ENCODE measurements at regions of chr1 and their contacts with region 1.

Region 1: DNA sequence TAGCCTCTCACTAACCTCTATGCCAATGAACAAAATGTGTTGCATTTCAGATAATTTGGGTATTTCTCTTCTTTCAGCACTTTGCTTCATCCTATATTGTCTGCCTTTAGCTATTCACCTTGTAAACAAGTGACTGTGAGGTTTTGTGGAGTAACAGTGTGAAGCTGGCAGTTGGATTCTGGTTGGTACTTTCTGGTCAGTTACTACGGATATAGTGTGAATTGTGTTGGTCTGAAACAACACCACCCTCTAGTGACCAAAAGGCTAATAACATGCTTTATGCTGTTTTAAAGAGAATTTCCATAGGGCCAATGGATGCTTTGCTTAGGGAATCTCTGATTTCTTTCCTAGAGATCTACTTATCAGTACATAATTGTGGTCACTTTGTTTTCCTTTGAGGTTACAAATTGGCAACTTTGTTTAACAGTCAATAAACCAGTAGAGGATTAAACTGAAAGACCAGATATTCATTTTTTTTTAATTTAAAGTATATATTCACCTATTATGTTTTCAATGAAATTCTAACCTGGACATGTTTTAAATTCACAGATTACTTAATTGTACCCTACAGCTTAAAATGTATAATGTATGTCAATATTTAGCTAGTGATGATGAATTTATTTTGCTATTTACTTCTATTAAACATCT is 2.5 kb upstream of the PTGER3 start:
- DNase-seq: peak in 3 of 7 donors; percentile 22 to 35 (median 30)
- H3K4me3 ChIP-seq: no peak overlapping the region
- H3K27ac ChIP-seq: no peak overlapping the region
- H3K4me1 ChIP-seq: peaks cover 12 to 13% of the 10 kb centered on the region in 2 donors
- H3K27me3 ChIP-seq: peaks cover 23% of the 10 kb centered on the region
- CTCF ChIP-seq: peak; percentile 63 to 87 (median 82)
- POLR2A ChIP-seq: no peak

Region 2: GRCh38 chr1:70685300-70686241 is 364.5 kb before region 1 on chr1:
- intact Hi-C with region 1: loop called (anchors 5 kb)
- DNase-seq: peak; percentile 60 to 88 (median 76)
- H3K4me3 ChIP-seq: no peak overlapping the region
- H3K27ac ChIP-seq: no peak overlapping the region
- H3K4me1 ChIP-seq: no peaks in the 10 kb centered on the region
- H3K27me3 ChIP-seq: no peaks in the 10 kb centered on the region
- CTCF ChIP-seq: peak; percentile 81 to 92 (median 90)
- POLR2A ChIP-seq: no peak

Region 3: DNA sequence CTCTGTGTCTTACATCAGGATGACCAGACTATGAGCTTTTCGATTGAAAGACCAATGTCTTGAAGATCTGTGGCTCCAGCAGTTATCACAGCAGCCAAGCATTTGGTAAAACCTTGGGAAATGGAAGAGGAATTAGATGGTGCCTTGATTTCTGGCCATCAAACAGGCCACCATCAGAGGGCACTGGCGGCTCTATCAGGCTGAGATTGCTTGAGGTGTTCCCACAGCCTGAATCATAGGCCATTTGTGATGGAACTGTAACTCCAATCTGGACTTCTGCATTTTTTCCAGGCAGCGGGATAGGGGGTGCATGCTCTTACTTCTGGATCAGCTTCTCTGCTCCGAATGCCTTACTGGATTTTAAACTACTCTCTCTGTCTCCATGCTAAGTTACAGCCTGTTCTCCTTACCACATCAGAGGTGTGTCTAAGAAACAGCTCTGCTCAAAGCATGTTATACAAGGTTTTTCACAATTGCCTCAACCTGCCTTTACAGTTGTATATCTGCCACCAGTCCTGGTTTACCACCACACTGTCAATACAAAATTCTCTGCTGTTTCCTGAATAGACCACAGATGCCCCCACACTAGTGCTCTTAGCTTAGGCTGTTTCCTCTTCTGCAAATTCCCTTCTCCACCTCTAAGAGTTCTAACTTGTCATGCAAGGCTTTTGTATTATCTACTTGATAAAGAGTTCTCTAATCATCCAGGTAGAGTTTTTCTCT is 183.4 kb before region 1 on chr1:
- intact Hi-C with region 1: loop called in 1 of 2 experiments (anchors 10 kb)
- DNase-seq: peak; percentile 19 to 67 (median 37)
- H3K4me3 ChIP-seq: no peak overlapping the region
- H3K27ac ChIP-seq: no peak overlapping the region
- H3K4me1 ChIP-seq: no peaks in the 10 kb centered on the region
- H3K27me3 ChIP-seq: no peaks in the 10 kb centered on the region
- CTCF ChIP-seq: peak in 5 of 6 experiments; percentile 19 to 41 (median 29)
- POLR2A ChIP-seq: no peak

Region 4: GRCh38 chr1:70910013-70910412 is 140.1 kb before region 1 on chr1:
- intact Hi-C with region 1: no loop called
- DNase-seq: no peak
- H3K4me3 ChIP-seq: no peak overlapping the region
- H3K27ac ChIP-seq: no peak overlapping the region
- H3K4me1 ChIP-seq: peaks cover 4 to 6% of the 10 kb centered on the region in 2 donors
- H3K27me3 ChIP-seq: no peaks in the 10 kb centered on the region
- CTCF ChIP-seq: no peak
- POLR2A ChIP-seq: no peak

Region 5: DNA sequence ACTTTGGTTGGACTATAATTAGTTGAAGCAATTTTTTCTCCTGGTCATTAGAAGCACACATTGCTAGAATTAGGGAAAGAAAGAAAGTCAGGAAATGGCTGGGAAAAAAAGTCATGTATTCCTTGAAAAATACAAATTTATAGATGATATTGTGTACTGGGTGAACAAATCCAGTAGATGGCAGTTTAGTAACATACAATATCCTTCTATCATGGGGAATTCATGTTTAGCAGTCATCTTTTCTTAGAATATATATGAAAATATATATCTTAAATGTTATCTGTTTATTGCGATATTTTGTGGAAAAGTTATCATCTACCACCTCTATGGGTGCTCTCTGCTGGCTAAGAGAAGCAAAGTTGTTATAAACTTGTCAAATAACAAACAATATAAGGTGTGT is 43.9 kb after region 1 on chr1:
- intact Hi-C with region 1: no loop called
- DNase-seq: no peak
- H3K4me3 ChIP-seq: no peak overlapping the region
- H3K27ac ChIP-seq: no peak overlapping the region
- H3K4me1 ChIP-seq: no peaks in the 10 kb centered on the region
- H3K27me3 ChIP-seq: no peaks in the 10 kb centered on the region
- CTCF ChIP-seq: peak; percentile 3 to 45 (median 25)
- POLR2A ChIP-seq: no peak

Region 6: GRCh38 chr1:71193153-71193552 is 143.1 kb after region 1 on chr1:
- intact Hi-C with region 1: no loop called
- DNase-seq: peak in 2 of 7 donors; percentile 9 to 17
- H3K4me3 ChIP-seq: no peak overlapping the region
- H3K27ac ChIP-seq: no peak overlapping the region
- H3K4me1 ChIP-seq: no peaks in the 10 kb centered on the region
- H3K27me3 ChIP-seq: no peaks in the 10 kb centered on the region
- CTCF ChIP-seq: no peak
- POLR2A ChIP-seq: no peak

Measured in adrenal gland (tissue), 19 donors.